Transverse colon (tissue), 4 donors: ENCODE measurements at regions of chr2 and their contacts with region 1.

Region 1: GRCh38 chr2:133171393-133172004 is 396.8 kb downstream of the NCKAP5 start:
- DNase-seq: no peak
- H3K4me3 ChIP-seq: no peak overlapping the region
- H3K27ac ChIP-seq: no peak overlapping the region
- H3K4me1 ChIP-seq: no peaks in the 10 kb centered on the region
- H3K27me3 ChIP-seq: no peaks in the 10 kb centered on the region
- CTCF ChIP-seq: peak; percentile 45 to 63 (median 58)
- EP300 ChIP-seq: no peak
- POLR2A ChIP-seq: no peak

Region 2: DNA sequence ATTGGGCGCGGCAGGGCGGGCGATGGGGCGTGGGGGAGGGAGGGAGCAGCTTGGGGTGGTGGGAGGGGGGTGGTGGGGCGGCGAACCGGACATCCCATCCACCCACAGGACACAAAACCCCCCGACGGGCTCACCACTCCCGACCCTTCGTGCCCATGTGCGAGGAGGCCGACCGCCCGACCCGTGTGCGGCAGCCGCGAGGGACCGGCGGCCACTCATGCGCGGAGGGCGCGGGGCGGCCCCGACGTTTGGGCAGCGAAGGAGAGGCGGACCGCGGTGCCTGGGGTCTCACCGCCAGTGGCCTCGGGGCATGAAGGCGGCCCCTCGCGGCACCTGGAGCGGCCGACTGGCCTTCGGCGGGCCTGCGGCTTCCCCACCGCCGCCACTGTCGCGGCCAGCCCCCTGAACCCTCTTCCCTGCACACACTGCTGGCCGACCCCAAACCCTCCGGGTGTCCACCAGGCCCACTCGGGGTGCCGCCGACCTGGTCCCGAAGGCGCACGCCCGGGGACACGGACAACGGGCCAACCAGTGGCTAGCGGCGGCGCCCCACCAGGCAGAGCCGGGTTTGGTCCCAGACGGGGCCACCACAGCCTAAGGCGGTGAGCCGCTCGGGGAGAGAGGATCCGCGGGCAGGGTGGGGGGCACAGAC is 915.1 kb before region 1 on chr2:
- in situ Hi-C with region 1: loop called in 1 of 4 experiments (anchors 25 kb)
- intact Hi-C with region 1: no loop called
- DNase-seq: no peak
- H3K4me3 ChIP-seq: no peak overlapping the region
- H3K27ac ChIP-seq: no peak overlapping the region
- H3K4me1 ChIP-seq: peaks cover 0 to 3% (median 0%) of the 10 kb centered on the region in 4 donors
- H3K27me3 ChIP-seq: peaks cover 27% of the 10 kb centered on the region
- CTCF ChIP-seq: no peak
- EP300 ChIP-seq: no peak
- POLR2A ChIP-seq: no peak

Region 3: GRCh38 chr2:132547074-132547687 is 624.3 kb before region 1 on chr2:
- in situ Hi-C with region 1: loop called (anchors 10 to 25 kb)
- intact Hi-C with region 1: loop called (anchors 10 kb)
- DNase-seq: peak; percentile 69
- H3K4me3 ChIP-seq: no peak overlapping the region
- H3K27ac ChIP-seq: no peak overlapping the region
- H3K4me1 ChIP-seq: peaks cover 0 to 3% (median 0%) of the 10 kb centered on the region in 4 donors
- H3K27me3 ChIP-seq: no peaks in the 10 kb centered on the region
- CTCF ChIP-seq: peak; percentile 62 to 72 (median 69)
- EP300 ChIP-seq: no peak
- POLR2A ChIP-seq: no peak

Region 4: DNA sequence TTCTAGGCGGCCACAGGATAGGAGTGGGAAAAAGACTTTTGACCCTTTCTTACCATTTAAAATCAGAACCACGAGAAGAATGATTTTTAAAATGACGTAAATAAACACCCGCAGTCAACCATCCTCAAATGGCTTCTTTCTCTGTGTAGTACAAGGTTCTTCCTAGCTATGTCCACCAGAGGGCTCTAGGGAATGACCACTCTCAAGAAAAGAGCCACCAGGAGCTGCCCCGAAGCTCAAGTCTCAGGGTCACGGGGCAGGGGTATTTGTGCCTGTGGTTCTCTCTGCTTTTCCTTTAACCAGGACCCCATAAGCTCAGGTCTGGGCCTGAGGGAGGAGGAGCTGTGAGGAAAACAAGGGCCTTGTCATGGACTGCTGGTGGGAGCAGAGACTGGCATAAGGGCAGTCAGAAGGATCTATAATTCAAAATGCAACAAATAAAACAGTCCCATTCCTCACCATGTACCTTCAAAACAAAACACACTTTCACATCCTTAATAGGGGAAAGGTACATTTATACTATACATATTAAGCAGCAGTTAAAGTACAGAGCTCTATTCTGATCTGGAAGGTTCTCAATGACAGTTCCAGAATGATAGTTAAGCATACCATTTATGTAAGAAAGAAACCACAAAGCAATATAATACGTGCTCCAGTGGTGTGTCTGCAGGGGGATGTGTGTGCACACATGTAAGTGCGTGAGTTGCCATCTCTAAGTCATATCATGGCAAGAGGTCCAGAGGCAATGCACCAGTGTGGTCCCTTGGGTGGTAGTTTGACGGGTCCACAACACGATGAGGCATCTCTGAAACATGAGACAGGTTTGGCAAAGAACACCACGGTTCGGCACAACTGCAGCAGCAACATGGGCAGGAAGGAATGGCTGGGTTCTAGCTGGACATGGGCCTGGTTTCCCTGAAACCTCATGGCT is 520.1 kb before region 1 on chr2:
- in situ Hi-C with region 1: loop called in 1 of 4 experiments (anchors 25 kb)
- intact Hi-C with region 1: no loop called
- DNase-seq: no peak
- H3K4me3 ChIP-seq: no peak overlapping the region
- H3K27ac ChIP-seq: no peak overlapping the region
- H3K4me1 ChIP-seq: no peaks in the 10 kb centered on the region
- H3K27me3 ChIP-seq: no peaks in the 10 kb centered on the region
- CTCF ChIP-seq: peak in 3 of 5 experiments; percentile 18 to 55 (median 53)
- EP300 ChIP-seq: no peak
- POLR2A ChIP-seq: no peak

Region 5: GRCh38 chr2:133086176-133086575 is 85.3 kb before region 1 on chr2:
- in situ Hi-C with region 1: no loop called
- intact Hi-C with region 1: no loop called
- DNase-seq: no peak
- H3K4me3 ChIP-seq: no peak overlapping the region
- H3K27ac ChIP-seq: no peak overlapping the region
- H3K4me1 ChIP-seq: no peaks in the 10 kb centered on the region
- H3K27me3 ChIP-seq: no peaks in the 10 kb centered on the region
- CTCF ChIP-seq: no peak
- EP300 ChIP-seq: no peak
- POLR2A ChIP-seq: no peak